Heart right ventricle (tissue), 16 donors: ENCODE measurements at regions of chr4 and their contacts with region 1.

Region 1: GRCh38 chr4:183763990-183764754 is 105.1 kb downstream of the TRAPPC11 start:
- DNase-seq: peak in 1 of 2 donors; percentile 42
- ATAC-seq: peak in 7 of 8 donors; percentile 48 to 81 (median 65)
- H3K4me3 ChIP-seq: peak overlapping the region in 6 of 10 donors; percentile 24 to 58 (median 48)
- H3K27ac ChIP-seq: peak overlapping the region in 8 of 10 donors; percentile 77 to 93 (median 87)
- H3K4me1 ChIP-seq: peaks cover 0 to 40% (median 11%) of the 10 kb centered on the region in 9 donors
- H3K27me3 ChIP-seq: no peaks in the 10 kb centered on the region
- CTCF ChIP-seq: no peak

Region 2: GRCh38 chr4:183600189-183600685 is 163.9 kb before region 1 on chr4:
- intact Hi-C with region 1: no loop called
- DNase-seq: no peak
- ATAC-seq: no peak
- H3K4me3 ChIP-seq: no peak overlapping the region
- H3K27ac ChIP-seq: no peak overlapping the region
- H3K4me1 ChIP-seq: no peaks in the 10 kb centered on the region
- H3K27me3 ChIP-seq: no peaks in the 10 kb centered on the region
- CTCF ChIP-seq: peak in 2 of 9 donors; percentile 11 to 13

Region 3: GRCh38 chr4:183828125-183828524 is 64.0 kb after region 1 on chr4:
- intact Hi-C with region 1: loop called in 1 of 10 experiments (anchors 5 kb)
- DNase-seq: no peak
- ATAC-seq: no peak
- H3K4me3 ChIP-seq: no peak overlapping the region
- H3K27ac ChIP-seq: no peak overlapping the region
- H3K4me1 ChIP-seq: peaks cover 0 to 59% (median 36%) of the 10 kb centered on the region in 9 donors
- H3K27me3 ChIP-seq: no peaks in the 10 kb centered on the region
- CTCF ChIP-seq: no peak